ENCODE measurements at regions of chr6 and their contacts with region 1.

Region 1: DNA sequence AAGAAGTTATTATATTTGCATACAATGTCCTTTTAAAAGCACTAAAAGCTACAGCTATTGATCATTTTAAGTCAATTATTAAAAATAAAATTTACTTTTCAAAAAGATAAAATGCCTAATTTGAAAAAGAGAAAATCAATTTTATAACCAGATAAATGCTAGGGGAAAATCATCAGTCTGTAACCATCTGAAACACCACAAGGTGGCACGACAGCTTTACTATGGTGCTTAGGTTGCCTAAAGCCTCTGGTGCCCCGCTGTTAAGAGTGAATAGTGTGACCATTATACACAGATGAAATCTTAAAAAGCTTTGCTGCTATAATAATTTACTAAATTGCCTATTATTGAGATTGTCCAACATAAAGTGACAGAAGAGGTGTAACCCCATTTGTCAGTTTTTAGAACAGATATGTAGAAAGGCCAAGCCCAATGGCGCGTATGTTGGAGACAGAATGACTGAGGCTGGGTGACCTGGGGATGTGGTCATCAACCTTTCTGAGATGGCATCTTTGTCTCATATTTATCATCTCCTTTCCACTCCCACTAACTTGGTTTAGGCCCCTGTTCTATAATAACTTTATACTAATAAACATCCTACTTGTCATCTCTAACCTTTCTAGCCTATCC is 100.8 kb downstream of the MOXD1 start:
- DNase-seq: no peak
- H3K4me3 ChIP-seq: no peak overlapping the region
- CTCF ChIP-seq: peak; percentile 65

Region 2: GRCh38 chr6:131923356-131923755 is 377.1 kb before region 1 on chr6:
- CTCF ChIA-PET with region 1: interaction called, 172 read pairs
- POLR2A ChIA-PET with region 1: no interaction called
- DNase-seq: no peak
- H3K4me3 ChIP-seq: no peak overlapping the region
- CTCF ChIP-seq: peak; percentile 48

Region 3: DNA sequence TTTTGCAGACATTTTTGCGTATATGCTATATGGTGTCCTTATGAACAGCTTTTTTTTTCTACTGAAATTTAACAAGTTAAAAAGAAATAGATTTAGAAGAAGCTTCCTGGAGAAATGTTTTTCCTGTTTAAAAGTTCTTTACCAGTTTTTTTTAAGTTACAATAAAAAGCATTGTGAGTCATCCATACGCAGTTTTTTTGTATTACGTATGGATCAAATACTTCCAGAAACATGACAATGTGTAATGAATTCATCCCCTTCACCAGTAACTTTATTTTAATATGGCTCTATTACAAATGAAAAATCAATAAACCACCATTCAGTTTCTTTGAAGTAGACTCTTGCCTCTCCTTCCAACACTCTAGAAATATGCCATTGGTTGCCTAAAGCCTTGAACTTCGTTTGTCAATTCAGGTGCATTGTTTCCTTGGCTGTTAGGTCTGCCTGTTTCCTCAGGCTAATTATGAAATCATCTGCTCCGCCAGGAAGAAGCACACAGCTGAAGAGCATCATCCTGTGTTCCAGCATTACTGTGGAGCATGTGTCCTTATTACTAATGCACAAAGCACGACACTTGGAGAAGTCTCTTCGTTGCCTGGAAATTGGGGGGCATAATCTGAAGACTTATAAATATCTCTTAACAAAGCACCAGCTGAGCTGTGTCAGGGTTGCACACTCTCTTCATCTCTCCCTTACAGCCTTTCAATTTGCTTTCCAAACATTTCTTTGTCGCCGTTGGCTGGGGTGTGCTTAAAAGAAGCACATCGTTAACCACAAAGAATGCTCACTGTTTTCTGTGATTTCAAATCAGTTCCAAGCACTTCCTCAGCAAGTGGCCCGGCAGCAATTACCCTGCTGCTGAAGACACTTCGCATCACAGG is 91.2 kb after region 1 on chr6:
- CTCF ChIA-PET with region 1: interaction called, 21 read pairs
- POLR2A ChIA-PET with region 1: no interaction called
- DNase-seq: peak; percentile 78
- H3K4me3 ChIP-seq: peak overlapping the region; percentile 38
- CTCF ChIP-seq: no peak

Region 4: GRCh38 chr6:132465530-132466485 is 165.4 kb after region 1 on chr6:
- CTCF ChIA-PET with region 1: interaction called, 139 read pairs
- POLR2A ChIA-PET with region 1: no interaction called
- DNase-seq: no peak
- H3K4me3 ChIP-seq: no peak overlapping the region
- CTCF ChIP-seq: no peak

Region 5: GRCh38 chr6:132483779-132484679 is 183.6 kb after region 1 on chr6:
- CTCF ChIA-PET with region 1: interaction called, 493 read pairs
- POLR2A ChIA-PET with region 1: no interaction called
- DNase-seq: no peak
- H3K4me3 ChIP-seq: no peak overlapping the region
- CTCF ChIP-seq: peak; percentile 20

Region 6: DNA sequence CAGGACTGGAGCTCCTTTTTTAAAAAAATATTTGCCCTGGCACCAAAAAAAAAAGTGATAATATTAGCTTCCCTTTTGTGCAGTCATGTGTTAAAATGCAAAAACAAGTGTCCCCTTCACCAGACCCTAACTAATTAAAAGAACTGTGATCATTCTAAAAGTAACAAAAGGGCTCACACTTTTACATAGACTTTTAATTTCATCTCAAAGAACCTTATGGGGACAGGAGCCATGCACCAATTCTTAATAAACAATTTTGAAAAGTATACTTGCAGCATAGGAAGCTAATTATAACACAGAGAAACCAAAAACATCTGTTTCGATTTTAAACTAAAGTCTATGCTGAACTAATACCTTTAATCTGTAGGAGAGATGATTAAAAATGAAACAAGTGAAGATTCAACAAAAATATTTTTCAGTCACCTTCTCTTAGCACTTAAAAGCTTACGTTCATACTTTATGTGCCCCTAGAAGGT is 195.2 kb after region 1 on chr6:
- CTCF ChIA-PET with region 1: interaction called, 32 read pairs
- POLR2A ChIA-PET with region 1: no interaction called
- DNase-seq: no peak
- H3K4me3 ChIP-seq: no peak overlapping the region
- CTCF ChIP-seq: no peak

Measured in AG04449 (cell line).